ENCODE measurements at regions of chr17 and their contacts with region 1.

Region 1: GRCh38 chr17:9768381-9768934 is 22.9 kb downstream of the DHRS7C start:
- DNase-seq: no peak
- ATAC-seq: peak; percentile 22; the same call in 1 of the 3 replicates
- H3K4me3 ChIP-seq: no peak overlapping the region
- H3K27ac ChIP-seq: no peak overlapping the region
- H3K4me1 ChIP-seq: no peaks in the 10 kb centered on the region
- H3K27me3 ChIP-seq: no peaks in the 10 kb centered on the region
- CTCF ChIP-seq: peak in 2 of 3 experiments; percentile 8 to 21; a peak in 2 of 6 replicates
- EP300 ChIP-seq: no peak
- POLR2A ChIP-seq: no peak
- RAD21 ChIP-seq: 0 out of 2 replicates have a peak, but pooled peaks have one; percentile 29

Region 2: DNA sequence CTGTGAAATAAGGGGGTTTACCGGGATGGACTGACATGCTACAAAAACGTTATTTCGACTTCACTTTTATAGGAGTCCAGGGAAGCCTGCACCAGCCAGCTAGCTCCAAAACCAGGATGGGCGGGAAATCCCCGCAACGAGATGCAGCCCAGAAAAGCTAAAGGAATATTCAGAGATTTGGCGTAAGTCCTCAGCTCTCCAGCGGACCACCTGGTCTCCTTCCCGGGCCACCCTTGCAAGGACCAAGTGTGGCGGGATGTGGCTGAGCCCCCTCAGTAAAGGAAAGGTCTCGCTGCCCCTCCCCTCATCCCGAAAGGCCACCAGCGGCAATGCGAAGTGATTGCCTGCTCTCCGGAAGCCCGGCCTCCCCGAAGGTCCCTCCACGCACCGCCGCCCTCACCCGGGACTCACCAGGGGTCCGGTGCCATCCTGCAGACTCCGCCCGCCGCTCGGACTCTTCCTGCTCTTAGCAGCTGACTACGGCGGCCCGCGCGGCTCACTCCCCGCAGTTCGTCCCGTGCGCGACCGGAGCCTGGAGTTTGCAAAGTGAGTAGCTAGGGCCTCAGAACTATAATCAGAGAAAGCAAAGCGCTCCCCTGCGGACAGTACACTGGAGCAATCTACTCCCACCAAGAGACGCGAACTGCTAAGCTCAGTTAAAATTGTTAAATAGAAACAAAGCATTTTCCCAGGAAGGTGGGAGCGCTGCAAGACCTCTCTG is 192.9 kb before region 1 on chr17 and contains the start of gene STX8:
- CTCF ChIA-PET with region 1: interaction called, 12 read pairs
- POLR2A ChIA-PET with region 1: no interaction called
- RAD21 ChIA-PET with region 1: interaction called, 6 read pairs
- SMC1A ChIA-PET with region 1: interaction called, 3 read pairs
- in situ Hi-C with region 1: no loop called
- intact Hi-C with region 1: loop called (anchors 5 kb)
- DNase-seq: peak; percentile 48
- ATAC-seq: peak; percentile 96
- H3K4me3 ChIP-seq: peak within 1 kb of the TSS; percentile 84
- H3K27ac ChIP-seq: peak within 1 kb of the TSS; percentile 80
- H3K4me1 ChIP-seq: peaks cover 6% of the 10 kb centered on the region
- H3K27me3 ChIP-seq: no peaks in the 10 kb centered on the region
- CTCF ChIP-seq: no peak
- EP300 ChIP-seq: no peak
- POLR2A ChIP-seq: peak; percentile 80
- RAD21 ChIP-seq: no peak
- polyA plus RNA-seq, gene STX8: 147 to 151 TPM

Region 3: GRCh38 chr17:9729034-9729650 is 39.3 kb before region 1 on chr17:
- CTCF ChIA-PET with region 1: interaction called, 7 read pairs
- POLR2A ChIA-PET with region 1: no interaction called
- RAD21 ChIA-PET with region 1: interaction called, 8 read pairs
- SMC1A ChIA-PET with region 1: interaction called, 3 read pairs
- in situ Hi-C with region 1: no loop called
- intact Hi-C with region 1: loop called (anchors 2 kb)
- DNase-seq: peak; percentile 8
- ATAC-seq: peak; percentile 50; the same call in 1 of the 3 replicates
- H3K4me3 ChIP-seq: no peak overlapping the region
- H3K27ac ChIP-seq: no peak overlapping the region
- H3K4me1 ChIP-seq: no peaks in the 10 kb centered on the region
- H3K27me3 ChIP-seq: no peaks in the 10 kb centered on the region; a peak in 1 of 4 replicates
- CTCF ChIP-seq: peak; percentile 88 to 100 (median 98)
- EP300 ChIP-seq: no peak
- POLR2A ChIP-seq: no peak
- RAD21 ChIP-seq: peak; percentile 87

Region 4: GRCh38 chr17:9750524-9750923 is 17.9 kb before region 1 on chr17:
- CTCF ChIA-PET with region 1: interaction called, 10 read pairs
- POLR2A ChIA-PET with region 1: no interaction called
- RAD21 ChIA-PET with region 1: no interaction called
- SMC1A ChIA-PET with region 1: no interaction called
- in situ Hi-C with region 1: no loop called
- intact Hi-C with region 1: no loop called
- DNase-seq: no peak
- ATAC-seq: no peak
- H3K4me3 ChIP-seq: no peak overlapping the region
- H3K27ac ChIP-seq: no peak overlapping the region
- H3K4me1 ChIP-seq: no peaks in the 10 kb centered on the region
- H3K27me3 ChIP-seq: no peaks in the 10 kb centered on the region
- CTCF ChIP-seq: no peak
- EP300 ChIP-seq: no peak
- POLR2A ChIP-seq: no peak
- RAD21 ChIP-seq: no peak